Right ventricle myocardium superior (tissue), 1 donor: ENCODE measurements at regions of chrX and their contacts with region 1.

Region 1: GRCh38 chrX:118807151-118808017 is 16.2 kb upstream of the ZCCHC12 start:
- DNase-seq: no peak
- ATAC-seq: peak; percentile 56

Region 2: DNA sequence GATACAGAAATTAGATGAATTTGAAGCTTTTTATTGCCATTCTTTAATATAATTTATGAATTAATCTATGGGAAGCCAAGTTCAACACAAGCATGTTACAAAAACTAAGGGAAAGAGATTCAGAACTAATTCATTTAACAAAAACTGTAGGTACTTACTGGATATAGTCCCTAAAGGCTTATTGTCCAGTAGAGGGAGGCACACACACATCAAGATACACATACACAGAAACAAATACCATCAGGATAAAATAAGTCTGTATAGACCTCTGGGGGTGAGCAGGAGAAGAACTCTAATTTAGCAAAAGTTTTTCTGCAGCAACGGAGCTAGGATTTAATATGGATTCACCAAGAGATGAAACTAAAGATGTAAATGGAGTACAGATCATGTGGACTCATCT is 163.0 kb before region 1 on chrX:
- intact Hi-C with region 1: loop called (anchors 5 kb)
- DNase-seq: no peak
- ATAC-seq: no peak

Region 3: DNA sequence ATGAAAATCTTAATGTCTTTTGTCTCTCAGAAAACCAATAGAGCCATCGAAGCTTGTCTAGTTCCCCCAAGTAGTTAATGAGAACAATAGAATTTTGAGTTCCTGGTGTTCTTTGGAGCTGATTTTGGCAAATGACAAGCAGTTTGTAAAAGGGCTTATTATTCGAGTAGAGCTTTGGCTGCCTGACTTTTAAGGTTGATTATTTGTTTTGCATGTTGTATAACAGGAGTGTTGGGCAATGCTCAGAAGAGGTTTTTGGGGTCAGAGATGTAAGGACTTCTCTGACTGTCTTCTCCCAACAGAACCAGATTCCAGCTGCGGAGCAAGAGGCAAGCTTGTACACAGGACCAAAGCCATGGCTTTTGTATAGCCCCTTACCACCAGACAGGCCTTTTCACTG is 46.2 kb after region 1 on chrX:
- intact Hi-C with region 1: no loop called
- DNase-seq: no peak
- ATAC-seq: no peak